ENCODE measurements at regions of chr3 and their contacts with region 1.

Region 1: DNA sequence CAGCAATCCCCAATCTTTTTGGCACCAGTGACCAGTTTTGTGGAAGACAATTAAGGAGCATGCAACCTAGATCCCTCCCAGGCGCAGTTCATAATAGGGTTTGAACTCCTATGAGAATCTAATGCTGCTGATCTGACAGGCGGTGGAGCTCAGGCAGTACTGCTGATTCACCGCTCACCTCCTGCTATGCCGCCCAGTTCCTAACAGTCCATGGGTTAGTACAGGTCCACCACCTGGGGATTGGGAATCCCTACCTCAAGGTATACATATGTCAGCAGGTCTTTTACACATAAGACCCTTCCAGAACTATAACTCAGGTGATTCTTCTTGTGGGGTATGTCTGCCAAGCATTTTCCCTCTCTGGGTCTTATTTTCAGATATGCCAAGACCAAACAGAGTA is 182.2 kb downstream of the OSBPL10 start:
- DNase-seq: no peak
- H3K4me3 Mint-ChIP-seq: no peak overlapping the region
- H3K27ac Mint-ChIP-seq: no peak overlapping the region
- H3K4me1 Mint-ChIP-seq: no peaks in the 10 kb centered on the region
- H3K27me3 Mint-ChIP-seq: no peaks in the 10 kb centered on the region

Region 2: GRCh38 chr3:31762097-31762764 is 36.6 kb before region 1 on chr3:
- CTCF ChIA-PET with region 1: no interaction called
- POLR2A ChIA-PET with region 1: interaction called, 11 read pairs
- DNase-seq: no peak
- H3K4me3 Mint-ChIP-seq: no peak overlapping the region
- H3K27ac Mint-ChIP-seq: peak overlapping the region; percentile 58
- H3K4me1 Mint-ChIP-seq: peaks cover 36% of the 10 kb centered on the region
- H3K27me3 Mint-ChIP-seq: no peaks in the 10 kb centered on the region

Region 3: DNA sequence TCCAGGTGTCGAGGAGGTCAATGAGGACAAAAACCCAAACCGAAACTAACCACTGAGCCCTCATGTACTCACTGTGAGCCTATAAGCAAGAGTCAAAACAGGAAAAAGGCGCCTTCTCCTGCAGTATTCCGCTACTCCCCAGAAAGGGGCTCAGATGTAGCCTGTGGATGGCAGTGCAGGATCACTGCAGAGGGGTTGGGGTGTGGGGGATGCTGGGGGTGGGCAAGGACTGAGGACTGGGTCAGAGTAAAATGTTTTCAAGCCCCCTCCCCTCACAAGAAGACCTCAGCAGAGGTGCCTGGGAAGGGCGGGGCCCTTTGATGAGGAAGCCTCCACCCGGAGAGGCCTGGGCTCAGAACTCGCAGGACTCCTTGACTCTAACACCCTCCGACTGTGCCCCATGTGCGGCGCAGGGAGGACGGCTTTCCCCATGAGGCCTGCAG is 12.2 kb after region 1 on chr3:
- CTCF ChIA-PET with region 1: no interaction called
- POLR2A ChIA-PET with region 1: no interaction called
- DNase-seq: no peak
- H3K4me3 Mint-ChIP-seq: no peak overlapping the region
- H3K27ac Mint-ChIP-seq: no peak overlapping the region
- H3K4me1 Mint-ChIP-seq: peaks cover 2% of the 10 kb centered on the region
- H3K27me3 Mint-ChIP-seq: peaks cover 2% of the 10 kb centered on the region

Region 4: DNA sequence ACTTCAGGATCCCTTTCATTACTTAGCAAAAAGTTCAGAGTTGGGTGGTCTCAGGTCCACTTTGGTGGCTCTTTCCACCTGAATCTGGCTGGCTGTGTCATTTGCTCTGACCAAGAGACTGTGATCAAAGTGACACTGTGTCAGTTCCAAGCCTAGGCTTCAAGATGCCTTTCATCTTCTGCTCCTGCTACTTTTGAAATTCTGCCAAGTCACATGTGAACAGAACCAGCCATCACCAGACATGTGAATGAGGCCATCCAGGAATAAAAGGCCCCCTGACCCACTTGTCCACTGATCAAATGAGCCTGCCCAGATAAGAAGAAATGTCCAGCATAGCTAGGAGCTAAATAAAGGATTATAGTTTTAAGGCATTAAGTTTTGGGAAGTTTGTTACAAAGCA is 50.1 kb after region 1 on chr3:
- CTCF ChIA-PET with region 1: no interaction called
- POLR2A ChIA-PET with region 1: no interaction called
- DNase-seq: no peak
- H3K4me3 Mint-ChIP-seq: no peak overlapping the region
- H3K27ac Mint-ChIP-seq: no peak overlapping the region
- H3K4me1 Mint-ChIP-seq: no peaks in the 10 kb centered on the region
- H3K27me3 Mint-ChIP-seq: no peaks in the 10 kb centered on the region

Region 5: GRCh38 chr3:31918179-31919168 is 119.6 kb after region 1 on chr3:
- CTCF ChIA-PET with region 1: no interaction called
- POLR2A ChIA-PET with region 1: no interaction called
- DNase-seq: no peak
- H3K4me3 Mint-ChIP-seq: peak overlapping the region; percentile 44
- H3K27ac Mint-ChIP-seq: peak overlapping the region; percentile 91
- H3K4me1 Mint-ChIP-seq: peaks cover 39% of the 10 kb centered on the region
- H3K27me3 Mint-ChIP-seq: no peaks in the 10 kb centered on the region

Region 6: DNA sequence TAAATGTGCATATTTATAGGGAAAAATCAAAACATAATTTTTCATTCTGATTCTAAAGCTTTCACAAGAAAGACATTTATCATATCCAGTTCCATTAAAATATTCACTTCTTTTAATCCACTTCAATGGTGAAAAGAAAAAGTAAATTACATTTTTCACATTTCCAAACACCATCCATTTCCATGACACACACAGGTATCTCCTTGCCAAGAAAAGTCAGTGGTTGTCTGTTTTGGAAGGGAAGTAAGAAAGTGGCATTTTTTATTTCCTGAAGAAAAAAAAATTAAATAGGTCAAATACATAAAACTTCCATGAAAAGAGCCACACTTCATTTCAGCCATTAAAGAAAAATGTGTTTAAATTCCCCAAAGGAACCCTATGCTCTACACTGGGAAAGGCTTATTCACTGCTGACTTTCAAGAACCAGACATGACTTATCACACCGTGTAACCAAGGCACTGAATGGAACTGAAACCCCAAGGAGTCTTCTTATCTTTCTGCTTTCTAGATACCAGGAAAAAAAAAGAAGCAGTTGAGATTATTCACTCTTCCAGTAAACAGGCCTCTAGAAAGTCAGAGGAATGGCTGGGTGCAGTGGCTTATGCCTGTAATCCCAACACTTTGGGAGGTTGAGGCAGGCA is 137.7 kb after region 1 on chr3:
- CTCF ChIA-PET with region 1: no interaction called
- POLR2A ChIA-PET with region 1: no interaction called
- DNase-seq: no peak
- H3K4me3 Mint-ChIP-seq: no peak overlapping the region
- H3K27ac Mint-ChIP-seq: no peak overlapping the region
- H3K4me1 Mint-ChIP-seq: peaks cover 10% of the 10 kb centered on the region
- H3K27me3 Mint-ChIP-seq: peaks cover 2% of the 10 kb centered on the region

Measured in activated CD4-positive, alpha-beta T cell treated with anti-CD3 and anti-CD28 coated beads, Interleukin-2, amount 10 ng/mL, durations not matched to agents 7 days and 5 days (primary cell).